ENCODE measurements at regions of chr22 and their contacts with region 1.

Region 1: DNA sequence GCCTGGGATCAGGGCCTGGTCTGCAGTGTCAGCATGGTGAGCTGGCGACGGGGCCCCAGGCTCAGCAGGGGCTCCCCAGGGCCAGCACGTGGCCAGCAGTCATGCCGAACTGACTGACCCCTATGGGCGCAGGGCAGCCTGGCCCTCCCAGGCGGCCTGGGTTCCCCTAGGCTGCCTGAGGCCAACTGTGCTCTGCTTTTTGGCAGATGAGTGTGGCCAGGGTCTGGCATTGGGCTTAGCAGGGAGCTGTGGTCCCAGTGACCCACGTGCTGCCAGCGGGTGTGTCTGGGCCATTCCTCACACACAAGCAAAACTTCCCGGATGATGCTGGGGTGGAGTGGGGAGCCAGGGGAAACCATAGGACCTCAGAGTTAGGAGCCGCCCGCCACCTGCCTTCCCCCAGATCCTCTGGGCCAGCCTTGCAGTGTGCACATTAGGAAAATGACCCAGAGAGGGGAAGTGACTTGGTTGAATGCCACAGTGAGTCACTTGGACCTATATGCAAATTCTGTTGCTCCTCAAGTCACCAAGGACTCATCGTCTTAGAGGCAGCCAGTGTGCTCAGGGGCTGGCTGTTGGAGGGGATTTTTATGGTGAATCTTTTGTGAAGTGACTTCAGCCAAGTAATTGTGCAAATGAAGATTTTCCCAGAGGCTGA is 6.5 kb downstream of the ADORA2A start:
- DNase-seq: peak; percentile 94 to 100 (median 98)
- H3K4me3 ChIP-seq: peak overlapping the region in 1 of 3 experiments; percentile 23
- H3K4me3 Mint-ChIP-seq: peak overlapping the region; percentile 63 to 81
- H3K27ac ChIP-seq: peak overlapping the region; percentile 98 to 99
- H3K27ac Mint-ChIP-seq: peak overlapping the region; percentile 98 to 100 (median 100)
- H3K4me1 ChIP-seq: peaks cover 72 to 100% of the 10 kb centered on the region in 2 donors
- H3K4me1 Mint-ChIP-seq: peaks cover 88% of the 10 kb centered on the region
- H3K27me3 ChIP-seq: no peaks in the 10 kb centered on the region
- H3K27me3 Mint-ChIP-seq: peaks cover 0 to 2% (median 0%) of the 10 kb centered on the region in 3 donors
- CTCF ChIP-seq: no peak

Region 2: GRCh38 chr22:24325105-24325757 is 108.7 kb before region 1 on chr22:
- intact Hi-C with region 1: loop called in 1 of 2 experiments (anchors 5 kb)
- DNase-seq: peak; percentile 69 to 78 (median 72)
- H3K4me3 ChIP-seq: no peak overlapping the region
- H3K4me3 Mint-ChIP-seq: no peak overlapping the region
- H3K27ac ChIP-seq: no peak overlapping the region
- H3K27ac Mint-ChIP-seq: peak overlapping the region in 2 of 7 donors; percentile 18 to 69
- H3K4me1 ChIP-seq: peaks cover 6 to 12% of the 10 kb centered on the region in 2 donors
- H3K4me1 Mint-ChIP-seq: peaks cover 13% of the 10 kb centered on the region
- H3K27me3 ChIP-seq: no peaks in the 10 kb centered on the region
- H3K27me3 Mint-ChIP-seq: no peaks in the 10 kb centered on the region
- CTCF ChIP-seq: peak; percentile 84

Region 3: GRCh38 chr22:24474221-24474620 is 40.3 kb after region 1 on chr22:
- intact Hi-C with region 1: loop called (anchors 5 kb)
- DNase-seq: peak in 2 of 3 donors; percentile 36 to 68
- H3K4me3 ChIP-seq: no peak overlapping the region
- H3K4me3 Mint-ChIP-seq: peak overlapping the region in 1 of 2 donors; percentile 53
- H3K27ac ChIP-seq: peak overlapping the region; percentile 65 to 75
- H3K27ac Mint-ChIP-seq: peak overlapping the region; percentile 86 to 95 (median 90)
- H3K4me1 ChIP-seq: peaks cover 30 to 41% of the 10 kb centered on the region in 2 donors
- H3K4me1 Mint-ChIP-seq: peaks cover 42% of the 10 kb centered on the region
- H3K27me3 ChIP-seq: no peaks in the 10 kb centered on the region
- H3K27me3 Mint-ChIP-seq: peaks cover 0 to 2% (median 0%) of the 10 kb centered on the region in 3 donors
- CTCF ChIP-seq: no peak

Region 4: DNA sequence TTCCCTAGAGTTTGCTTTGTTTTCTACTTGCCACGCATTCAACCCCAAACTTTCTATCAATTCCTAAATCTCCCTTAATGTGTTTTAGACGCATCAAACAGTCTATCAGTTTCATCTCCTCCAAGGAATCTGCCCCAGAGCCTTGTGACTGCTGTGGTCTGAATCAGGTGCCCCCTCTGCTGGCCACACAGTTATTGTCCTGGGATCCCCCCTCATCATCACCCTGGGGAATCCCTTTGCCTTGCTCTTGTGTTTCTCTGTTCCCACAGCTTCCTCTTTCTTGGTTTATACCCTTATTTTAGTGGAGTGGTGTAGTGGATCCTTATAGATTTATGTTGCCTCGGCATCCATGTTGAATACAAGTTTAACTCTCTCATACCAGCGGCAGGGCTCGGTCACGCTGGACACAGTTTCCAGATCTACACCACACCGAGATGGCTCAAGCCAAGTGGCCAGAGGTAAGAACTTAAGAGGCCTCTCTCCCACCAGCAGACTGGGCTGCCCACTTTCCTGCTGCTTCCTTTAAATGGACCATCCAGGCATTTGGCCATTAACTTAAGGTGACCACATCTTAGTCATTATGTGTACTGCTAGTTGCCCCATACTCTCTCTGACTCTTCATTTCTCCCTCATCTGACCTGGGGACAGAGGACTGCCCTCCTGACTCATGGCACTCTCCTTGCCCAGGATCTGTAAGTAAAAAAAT is 69.3 kb after region 1 on chr22:
- intact Hi-C with region 1: loop called (anchors 2 kb)
- DNase-seq: peak; percentile 91 to 98 (median 95)
- H3K4me3 ChIP-seq: no peak overlapping the region
- H3K4me3 Mint-ChIP-seq: peak overlapping the region in 1 of 2 donors; percentile 26
- H3K27ac ChIP-seq: peak overlapping the region; percentile 66 to 79
- H3K27ac Mint-ChIP-seq: peak overlapping the region; percentile 92 to 99 (median 96)
- H3K4me1 ChIP-seq: peaks cover 64 to 65% of the 10 kb centered on the region in 2 donors
- H3K4me1 Mint-ChIP-seq: peaks cover 67% of the 10 kb centered on the region
- H3K27me3 ChIP-seq: no peaks in the 10 kb centered on the region
- H3K27me3 Mint-ChIP-seq: peaks cover 3 to 5% (median 5%) of the 10 kb centered on the region in 3 donors
- CTCF ChIP-seq: peak; percentile 83

Region 5: DNA sequence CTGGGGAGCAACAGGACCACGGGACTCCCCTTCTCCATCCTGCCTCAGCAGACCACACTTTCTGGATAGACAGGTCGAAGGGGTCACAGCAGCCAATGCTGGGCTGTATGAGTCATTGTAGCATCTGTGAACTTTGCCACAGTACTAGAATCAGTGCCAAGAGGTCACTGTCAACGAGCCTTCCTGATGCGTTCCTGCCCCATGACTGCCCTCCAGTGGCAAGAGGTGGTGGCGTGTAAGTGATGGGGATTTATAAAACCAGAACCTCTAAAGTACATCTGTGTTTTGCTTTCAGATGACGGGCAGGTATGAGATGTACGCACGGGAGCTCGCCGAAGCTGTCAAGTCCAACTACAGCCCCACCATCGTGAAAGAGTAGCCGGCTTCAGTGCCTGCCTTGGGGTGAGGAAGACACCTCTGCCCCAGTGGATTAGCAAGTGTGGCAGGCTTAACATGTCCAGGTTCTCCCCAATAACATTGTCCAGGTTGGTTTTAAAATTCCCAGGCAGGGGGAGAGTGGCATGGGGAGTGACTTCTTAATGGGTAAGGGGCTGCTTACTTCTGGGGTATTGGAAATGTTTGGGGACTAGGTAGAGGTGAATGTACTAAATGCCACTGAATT is 91.6 kb after region 1 on chr22:
- intact Hi-C with region 1: loop called in 1 of 2 experiments (anchors 1 kb)
- DNase-seq: peak; percentile 89 to 96 (median 96)
- H3K4me3 ChIP-seq: no peak overlapping the region
- H3K4me3 Mint-ChIP-seq: no peak overlapping the region
- H3K27ac ChIP-seq: no peak overlapping the region
- H3K27ac Mint-ChIP-seq: peak overlapping the region in 6 of 7 donors; percentile 33 to 85 (median 60)
- H3K4me1 ChIP-seq: peaks cover 10 to 19% of the 10 kb centered on the region in 2 donors
- H3K4me1 Mint-ChIP-seq: peaks cover 28% of the 10 kb centered on the region
- H3K27me3 ChIP-seq: no peaks in the 10 kb centered on the region
- H3K27me3 Mint-ChIP-seq: peaks cover 0 to 1% (median 0%) of the 10 kb centered on the region in 3 donors
- CTCF ChIP-seq: peak; percentile 84

Measured in CD14-positive monocyte (primary cell).